ENCODE measurements at regions of chr19 and their contacts with region 1.

Region 1: GRCh38 chr19:46513461-46514236 is 18.0 kb upstream of the PNMA8B start:
- DNase-seq: peak; percentile 75
- H3K4me3 Mint-ChIP-seq: no peak overlapping the region
- H3K27ac Mint-ChIP-seq: no peak overlapping the region
- H3K4me1 Mint-ChIP-seq: peaks cover 7% of the 10 kb centered on the region
- H3K27me3 Mint-ChIP-seq: no peaks in the 10 kb centered on the region
- CTCF ChIP-seq: peak; percentile 95

Region 2: DNA sequence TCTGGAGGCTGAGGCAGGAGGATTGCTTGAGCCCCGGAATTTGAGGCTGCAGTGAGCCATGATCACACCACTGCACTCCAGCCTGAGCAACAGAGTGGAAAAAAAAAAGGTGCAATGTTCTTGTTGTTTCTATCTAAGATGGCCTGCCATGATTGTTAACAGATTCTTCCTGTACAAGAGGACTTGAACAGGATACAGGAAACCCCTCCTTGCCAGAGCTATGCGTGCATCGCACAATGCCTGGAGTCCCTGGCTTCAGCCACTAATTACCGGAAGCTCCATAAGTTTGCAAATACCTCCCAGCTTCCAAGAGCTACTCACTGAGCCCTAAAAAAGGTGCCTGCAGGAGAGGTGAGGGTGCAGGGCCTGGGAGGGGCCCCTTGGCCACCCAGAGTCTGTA is 229.9 kb before region 1 on chr19:
- CTCF ChIA-PET with region 1: interaction called, 11 read pairs
- POLR2A ChIA-PET with region 1: interaction called, 3 read pairs
- intact Hi-C with region 1: loop called (anchors 1 kb)
- DNase-seq: no peak
- H3K4me3 Mint-ChIP-seq: no peak overlapping the region
- H3K27ac Mint-ChIP-seq: no peak overlapping the region
- H3K4me1 Mint-ChIP-seq: peaks cover 4% of the 10 kb centered on the region
- H3K27me3 Mint-ChIP-seq: no peaks in the 10 kb centered on the region
- CTCF ChIP-seq: no peak

Region 3: GRCh38 chr19:46537136-46538097 is 23.8 kb after region 1 on chr19:
- CTCF ChIA-PET with region 1: interaction called, 10 read pairs
- POLR2A ChIA-PET with region 1: no interaction called
- intact Hi-C with region 1: loop called (anchors 1 kb)
- DNase-seq: peak; percentile 53
- H3K4me3 Mint-ChIP-seq: no peak overlapping the region
- H3K27ac Mint-ChIP-seq: no peak overlapping the region
- H3K4me1 Mint-ChIP-seq: no peaks in the 10 kb centered on the region
- H3K27me3 Mint-ChIP-seq: no peaks in the 10 kb centered on the region
- CTCF ChIP-seq: peak; percentile 91

Region 4: DNA sequence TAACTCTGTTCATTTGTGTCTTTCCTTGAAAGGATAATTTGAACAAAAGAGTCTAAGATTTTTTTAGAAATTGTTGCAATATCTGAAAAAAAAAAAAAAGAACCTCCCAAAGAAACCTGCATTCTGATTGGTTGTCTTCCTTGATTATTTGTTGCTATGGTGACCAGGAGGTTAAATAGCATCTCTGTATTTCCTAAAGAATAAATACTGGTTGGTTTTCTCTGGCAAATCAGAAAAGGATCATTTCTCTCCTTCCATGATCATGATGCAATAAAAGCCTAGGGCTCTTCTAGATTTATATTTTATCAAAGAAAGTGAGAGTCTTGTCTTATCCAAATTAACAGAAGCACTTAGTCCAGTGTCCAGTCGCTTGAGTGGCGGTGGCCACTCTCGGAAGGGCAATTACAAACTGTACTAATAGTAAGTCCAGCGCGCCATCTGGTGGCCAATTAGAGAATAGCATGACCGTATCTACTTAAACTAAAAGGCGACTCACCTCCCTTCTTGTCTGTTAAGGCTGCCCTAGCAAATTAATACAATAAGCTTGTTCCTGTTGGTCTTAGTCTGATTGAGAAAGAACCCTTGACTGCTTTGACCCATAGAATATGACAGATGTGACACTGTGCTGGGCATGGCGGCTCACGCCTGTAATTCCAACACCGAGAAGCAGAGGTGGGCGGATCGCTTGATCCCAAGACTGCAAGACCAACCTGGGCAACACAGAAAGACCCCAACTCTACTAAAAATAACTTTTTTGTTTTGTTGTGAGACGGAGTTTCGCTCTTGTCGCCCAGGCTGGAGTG is 29.0 kb after region 1 on chr19:
- CTCF ChIA-PET with region 1: interaction called, 10 read pairs
- POLR2A ChIA-PET with region 1: no interaction called
- intact Hi-C with region 1: loop called (anchors 1 kb)
- DNase-seq: peak; percentile 93
- H3K4me3 Mint-ChIP-seq: no peak overlapping the region
- H3K27ac Mint-ChIP-seq: no peak overlapping the region
- H3K4me1 Mint-ChIP-seq: no peaks in the 10 kb centered on the region
- H3K27me3 Mint-ChIP-seq: no peaks in the 10 kb centered on the region
- CTCF ChIP-seq: peak; percentile 86